PC-3 (cell line): ENCODE measurements at regions of chr12 and their contacts with region 1.

Region 1: GRCh38 chr12:68899251-68899771 is 33.7 kb downstream of the CPM start:
- DNase-seq: peak; percentile 62
- ATAC-seq: peak; percentile 56
- H3K4me3 ChIP-seq: no peak overlapping the region
- H3K27ac ChIP-seq: no peak overlapping the region
- H3K4me1 ChIP-seq: peaks cover 7% of the 10 kb centered on the region
- H3K27me3 ChIP-seq: no peaks in the 10 kb centered on the region
- CTCF ChIP-seq: peak; percentile 77

Region 2: DNA sequence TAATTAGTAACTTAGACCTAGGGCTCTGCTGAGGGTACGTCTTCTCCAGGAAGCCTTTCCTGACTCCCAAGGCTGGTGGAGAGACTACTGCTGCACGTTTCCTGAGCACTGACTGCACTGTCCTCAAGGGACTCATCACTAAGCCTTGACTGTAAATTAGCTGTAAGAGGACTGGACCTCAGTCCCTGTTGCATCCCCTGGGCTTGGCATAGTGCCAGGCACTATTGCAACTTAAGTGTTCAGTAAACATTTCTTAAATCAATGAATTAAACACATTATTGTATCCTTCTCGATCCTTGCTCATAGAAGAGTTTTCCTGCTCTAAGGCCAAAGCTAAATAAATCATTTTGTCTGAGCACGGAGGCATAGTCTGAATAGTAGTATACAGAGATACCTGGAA is 941.9 kb before region 1 on chr12:
- CTCF ChIA-PET with region 1: no interaction called
- POLR2A ChIA-PET with region 1: no interaction called
- intact Hi-C with region 1: no loop called
- DNase-seq: no peak
- ATAC-seq: no peak
- H3K4me3 ChIP-seq: no peak overlapping the region
- H3K27ac ChIP-seq: no peak overlapping the region
- H3K4me1 ChIP-seq: no peaks in the 10 kb centered on the region
- H3K27me3 ChIP-seq: no peaks in the 10 kb centered on the region
- CTCF ChIP-seq: no peak

Region 3: DNA sequence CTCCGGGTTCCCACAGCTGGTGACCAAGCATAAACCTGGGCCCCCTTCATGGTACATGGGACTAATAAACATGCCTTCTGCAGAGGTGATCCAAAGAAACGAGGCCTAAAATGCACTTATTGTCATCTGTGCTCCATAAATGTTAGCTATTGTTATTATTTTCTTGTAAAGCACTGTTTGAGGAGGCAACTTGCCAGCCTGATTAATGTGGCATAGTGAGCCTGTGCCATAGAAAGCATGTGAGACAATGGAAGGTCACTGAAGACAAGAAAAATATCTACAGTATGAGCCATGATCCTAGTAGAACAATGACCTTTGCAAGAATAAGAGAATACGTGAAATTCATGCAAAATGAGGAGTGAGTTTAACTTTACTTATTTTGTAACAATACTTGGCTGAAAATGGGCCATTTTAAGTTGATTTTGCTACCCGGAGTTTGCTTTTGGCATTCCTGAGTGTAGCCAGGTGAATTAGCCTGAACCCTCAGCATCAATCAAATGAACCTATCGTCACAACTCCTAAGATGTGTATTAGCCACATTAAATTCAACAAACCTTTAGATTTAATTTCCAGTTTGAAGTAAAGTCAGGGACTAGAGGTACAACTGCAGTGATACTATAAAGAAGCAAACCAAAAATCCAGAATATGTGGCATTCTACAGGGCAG is 18.5 kb before region 1 on chr12:
- CTCF ChIA-PET with region 1: no interaction called
- POLR2A ChIA-PET with region 1: no interaction called
- intact Hi-C with region 1: no loop called
- DNase-seq: peak; percentile 13
- ATAC-seq: peak; percentile 42; the same call in 1 of the 2 replicates
- H3K4me3 ChIP-seq: no peak overlapping the region
- H3K27ac ChIP-seq: no peak overlapping the region
- H3K4me1 ChIP-seq: no peaks in the 10 kb centered on the region
- H3K27me3 ChIP-seq: no peaks in the 10 kb centered on the region
- CTCF ChIP-seq: no peak

Region 4: DNA sequence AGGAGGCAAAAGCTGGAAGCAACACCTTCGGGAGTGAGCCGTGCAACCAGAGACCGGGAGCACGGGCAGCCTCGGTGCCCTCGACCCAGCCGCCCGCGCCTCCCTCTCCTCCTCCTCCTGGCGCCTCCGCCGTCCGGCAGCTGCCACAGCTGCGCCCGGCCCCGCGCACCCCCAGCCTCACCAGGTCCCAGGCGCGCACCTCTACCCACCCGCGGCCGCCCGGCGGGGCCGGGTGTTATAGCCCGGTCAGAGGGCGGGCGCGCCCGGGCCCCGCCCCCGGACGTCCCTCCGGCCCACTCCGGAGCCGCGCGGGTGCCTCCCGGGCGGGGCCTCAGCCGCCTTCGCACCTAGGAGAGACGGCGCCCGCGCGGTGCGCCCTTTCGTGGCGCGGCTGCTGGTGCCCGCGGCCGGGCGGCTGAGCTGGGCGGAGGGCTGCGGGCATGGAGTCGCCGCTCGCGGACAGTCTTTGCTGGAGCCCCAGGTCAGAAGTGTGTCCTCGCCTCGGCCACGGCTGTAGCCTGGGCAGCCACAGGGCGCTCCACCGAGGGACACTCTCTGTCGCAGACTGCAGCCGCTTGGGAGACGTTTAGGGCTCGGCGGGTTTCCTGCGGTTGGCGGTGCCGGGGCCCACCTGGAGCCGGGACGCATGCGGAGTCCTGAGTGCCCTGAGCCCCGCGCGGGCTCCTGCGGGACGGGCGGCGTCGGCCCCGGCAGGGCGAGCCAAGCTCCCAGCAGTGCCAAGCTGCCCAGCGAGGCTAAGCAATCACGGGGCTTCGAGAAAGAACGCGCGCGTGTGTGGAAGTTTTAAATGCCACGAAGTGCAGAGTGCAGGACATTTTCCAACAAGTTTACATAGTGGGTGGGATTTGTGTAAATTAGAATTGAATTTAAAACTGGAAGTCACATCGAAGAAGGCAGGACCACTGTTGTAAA is 33.9 kb after region 1 on chr12 and contains the start of gene CPM:
- CTCF ChIA-PET with region 1: no interaction called
- POLR2A ChIA-PET with region 1: no interaction called
- intact Hi-C with region 1: loop called (anchors 2 kb)
- DNase-seq: peak; percentile 72
- ATAC-seq: peak; percentile 97
- H3K4me3 ChIP-seq: peak within 1 kb of the TSS; percentile 83
- H3K27ac ChIP-seq: no peak within 1 kb of the TSS
- H3K4me1 ChIP-seq: peaks cover 12% of the 10 kb centered on the region; the same call in 1 of the 2 replicates
- H3K27me3 ChIP-seq: peaks cover 4% of the 10 kb centered on the region; the same call in 1 of the 2 replicates
- CTCF ChIP-seq: no peak
- total RNA-seq, gene CPM: 3.1 and 5.3 TPM in 2 replicates

Region 5: GRCh38 chr12:69173368-69173767 is 274.1 kb after region 1 on chr12:
- CTCF ChIA-PET with region 1: no interaction called
- POLR2A ChIA-PET with region 1: no interaction called
- intact Hi-C with region 1: no loop called
- DNase-seq: no peak
- ATAC-seq: no peak
- H3K4me3 ChIP-seq: no peak overlapping the region
- H3K27ac ChIP-seq: no peak overlapping the region
- H3K4me1 ChIP-seq: no peaks in the 10 kb centered on the region
- H3K27me3 ChIP-seq: no peaks in the 10 kb centered on the region
- CTCF ChIP-seq: no peak